ENCODE measurements at regions of chr14 and their contacts with region 1.

Region 1: DNA sequence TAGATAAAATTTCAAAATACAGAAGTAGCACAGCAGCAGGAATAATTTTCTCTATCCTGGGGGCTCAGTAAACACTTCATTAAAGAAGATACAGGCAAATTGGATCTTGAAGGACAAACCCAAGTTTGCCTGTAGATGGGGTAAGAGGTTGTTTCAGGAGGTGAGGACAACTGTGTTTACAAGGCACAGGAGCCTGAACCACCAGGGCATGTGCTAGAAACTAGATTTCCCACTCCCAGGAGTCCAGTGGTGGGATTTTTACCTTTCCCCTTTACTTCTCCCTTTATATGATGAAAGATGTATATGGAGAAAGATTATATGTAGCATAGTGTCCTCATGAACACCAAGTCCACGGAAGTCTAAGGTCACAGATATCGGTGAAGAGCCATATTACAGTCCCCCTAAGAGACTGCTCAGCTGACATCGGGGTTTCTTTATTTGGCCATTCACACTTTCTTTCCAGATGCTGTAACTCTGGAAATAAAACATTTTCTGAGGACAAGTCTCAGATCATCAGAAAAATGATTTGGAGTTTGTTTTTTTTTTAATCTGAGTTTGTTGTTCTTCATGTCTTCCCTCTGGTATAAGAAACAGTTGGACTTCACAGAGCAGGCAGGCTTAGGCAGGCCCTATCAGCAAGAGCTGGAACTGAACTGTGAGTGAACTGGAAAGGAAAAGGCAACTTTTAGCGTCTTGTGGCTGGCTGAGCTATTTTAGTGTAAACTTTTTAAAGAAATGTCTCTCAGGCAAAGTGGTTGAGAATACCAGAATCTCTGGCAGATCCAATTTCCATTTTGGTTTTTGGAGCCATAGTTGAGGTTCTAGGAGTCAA is 8.0 kb upstream of the EVL start:
- DNase-seq: no peak
- ATAC-seq: peak in 7 of 8 donors; percentile 33 to 78 (median 68)
- H3K4me3 ChIP-seq: no peak overlapping the region
- H3K27ac ChIP-seq: peak overlapping the region in 6 of 10 donors; percentile 12 to 54 (median 42)
- H3K4me1 ChIP-seq: peaks cover 0 to 40% (median 17%) of the 10 kb centered on the region in 9 donors
- H3K27me3 ChIP-seq: no peaks in the 10 kb centered on the region
- CTCF ChIP-seq: peak in 7 of 9 donors; percentile 14 to 51 (median 40)

Region 2: GRCh38 chr14:99862136-99862535 is 195.0 kb before region 1 on chr14:
- intact Hi-C with region 1: no loop called
- DNase-seq: no peak
- ATAC-seq: no peak
- H3K4me3 ChIP-seq: no peak overlapping the region
- H3K27ac ChIP-seq: no peak overlapping the region
- H3K4me1 ChIP-seq: peaks cover 0 to 4% (median 0%) of the 10 kb centered on the region in 9 donors
- H3K27me3 ChIP-seq: no peaks in the 10 kb centered on the region
- CTCF ChIP-seq: no peak

Region 3: DNA sequence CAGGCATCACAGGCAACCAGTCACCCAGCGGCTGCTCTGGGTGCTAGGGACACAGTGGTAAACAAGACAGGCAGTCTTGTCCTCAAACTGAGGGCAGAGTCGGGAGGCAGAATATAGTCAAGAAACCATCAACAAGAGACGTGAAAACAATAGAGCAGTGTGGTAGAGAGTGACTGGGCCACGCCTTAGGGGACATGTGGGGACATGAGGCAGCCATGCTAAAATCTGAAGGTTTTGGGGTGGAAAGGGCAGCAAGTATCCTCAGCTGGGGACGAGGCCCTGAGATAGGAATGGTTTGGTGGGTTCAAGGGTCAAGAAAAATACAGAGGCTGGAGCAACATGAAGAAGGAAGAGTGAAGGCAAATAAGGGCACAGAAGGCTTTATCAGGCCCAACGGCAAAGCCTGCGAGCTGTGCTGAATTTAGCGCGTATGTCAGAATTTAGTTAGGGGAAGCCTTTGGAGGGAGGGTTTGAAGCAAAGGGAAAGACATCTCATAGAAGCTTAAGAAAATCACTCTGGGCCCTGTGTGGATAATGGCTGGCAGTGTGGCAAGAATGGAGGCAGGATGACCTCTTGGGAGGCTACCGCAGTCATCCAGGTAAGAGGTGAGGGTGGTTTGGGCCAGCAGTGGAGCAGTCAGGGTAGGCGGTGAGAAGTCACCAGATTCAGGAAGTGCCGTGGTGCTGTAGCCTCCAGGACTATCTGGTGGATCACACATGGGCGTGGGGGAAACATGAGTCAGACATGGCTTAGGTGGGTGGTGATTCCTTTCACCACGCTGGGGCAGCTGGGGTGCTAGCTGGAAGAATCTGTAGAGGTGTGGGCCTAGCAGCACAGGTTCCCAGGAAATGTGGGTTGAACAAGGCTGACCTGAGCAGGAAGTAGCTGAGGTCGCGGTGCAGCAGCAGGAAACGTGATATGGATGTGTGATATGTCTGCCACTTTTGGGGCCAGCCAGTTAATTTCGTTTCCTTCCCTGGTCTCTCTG is 11.1 kb after region 1 on chr14:
- intact Hi-C with region 1: loop called in 1 of 10 experiments (anchors 1 kb)
- DNase-seq: peak; percentile 20 to 28
- ATAC-seq: peak; percentile 35 to 82 (median 52)
- H3K4me3 ChIP-seq: peak overlapping the region in 2 of 10 donors; percentile 6 to 55
- H3K27ac ChIP-seq: peak overlapping the region in 6 of 10 donors; percentile 8 to 93 (median 16)
- H3K4me1 ChIP-seq: peaks cover 0 to 85% (median 29%) of the 10 kb centered on the region in 9 donors
- H3K27me3 ChIP-seq: no peaks in the 10 kb centered on the region
- CTCF ChIP-seq: no peak

Measured in heart right ventricle (tissue), 16 donors.